Vagina (tissue), 2 donors: ENCODE measurements at regions of chr2 and their contacts with region 1.

Region 1: DNA sequence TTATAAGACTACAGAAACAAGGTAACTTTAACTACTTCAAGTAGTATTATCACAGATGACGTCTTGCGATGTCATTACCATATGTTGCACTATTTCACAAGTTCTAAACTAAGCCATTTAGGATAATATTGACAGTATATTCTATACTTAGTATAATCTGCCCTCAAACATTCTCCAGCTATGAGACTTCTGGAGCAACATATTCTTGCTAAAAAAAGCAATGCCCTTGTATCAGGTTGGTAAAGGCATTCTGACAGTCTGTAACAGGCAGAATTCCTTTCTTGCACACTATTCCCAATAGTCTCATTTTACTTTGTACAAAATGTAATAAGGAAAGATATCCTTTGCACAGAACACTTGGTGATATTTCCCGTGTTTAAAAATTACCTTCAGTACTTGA is 694.8 kb upstream of the PKDCC start:
- DNase-seq: no peak
- H3K4me3 ChIP-seq: no peak overlapping the region
- H3K27ac ChIP-seq: no peak overlapping the region
- H3K4me1 ChIP-seq: no peaks in the 10 kb centered on the region
- H3K27me3 ChIP-seq: no peaks in the 10 kb centered on the region
- CTCF ChIP-seq: no peak
- POLR2A ChIP-seq: no peak

Region 2: DNA sequence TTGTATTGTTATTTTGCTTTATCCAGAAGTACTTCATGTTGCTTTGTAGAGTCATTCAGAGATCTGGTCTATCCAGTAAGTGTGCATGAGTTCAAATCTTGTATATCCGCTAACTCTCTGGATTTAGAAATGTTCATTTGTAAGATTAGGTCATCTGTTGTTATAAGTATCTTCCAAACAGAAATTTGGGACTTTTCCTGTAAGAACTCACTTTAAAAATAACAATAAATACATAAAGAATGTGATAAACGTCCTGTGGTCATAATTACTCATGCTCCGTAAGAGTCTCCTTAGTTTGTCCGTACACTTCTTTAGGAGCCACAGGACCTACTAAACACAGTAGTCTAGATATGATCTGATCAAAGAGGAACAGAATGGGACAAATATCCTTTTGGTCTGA is 201.3 kb before region 1 on chr2:
- intact Hi-C with region 1: loop called (anchors 5 kb)
- DNase-seq: no peak
- H3K4me3 ChIP-seq: no peak overlapping the region
- H3K27ac ChIP-seq: no peak overlapping the region
- H3K4me1 ChIP-seq: no peaks in the 10 kb centered on the region
- H3K27me3 ChIP-seq: no peaks in the 10 kb centered on the region
- CTCF ChIP-seq: no peak
- POLR2A ChIP-seq: no peak